Heart left ventricle (tissue), 16 donors: ENCODE measurements at regions of chr4 and their contacts with region 1.

Region 1: DNA sequence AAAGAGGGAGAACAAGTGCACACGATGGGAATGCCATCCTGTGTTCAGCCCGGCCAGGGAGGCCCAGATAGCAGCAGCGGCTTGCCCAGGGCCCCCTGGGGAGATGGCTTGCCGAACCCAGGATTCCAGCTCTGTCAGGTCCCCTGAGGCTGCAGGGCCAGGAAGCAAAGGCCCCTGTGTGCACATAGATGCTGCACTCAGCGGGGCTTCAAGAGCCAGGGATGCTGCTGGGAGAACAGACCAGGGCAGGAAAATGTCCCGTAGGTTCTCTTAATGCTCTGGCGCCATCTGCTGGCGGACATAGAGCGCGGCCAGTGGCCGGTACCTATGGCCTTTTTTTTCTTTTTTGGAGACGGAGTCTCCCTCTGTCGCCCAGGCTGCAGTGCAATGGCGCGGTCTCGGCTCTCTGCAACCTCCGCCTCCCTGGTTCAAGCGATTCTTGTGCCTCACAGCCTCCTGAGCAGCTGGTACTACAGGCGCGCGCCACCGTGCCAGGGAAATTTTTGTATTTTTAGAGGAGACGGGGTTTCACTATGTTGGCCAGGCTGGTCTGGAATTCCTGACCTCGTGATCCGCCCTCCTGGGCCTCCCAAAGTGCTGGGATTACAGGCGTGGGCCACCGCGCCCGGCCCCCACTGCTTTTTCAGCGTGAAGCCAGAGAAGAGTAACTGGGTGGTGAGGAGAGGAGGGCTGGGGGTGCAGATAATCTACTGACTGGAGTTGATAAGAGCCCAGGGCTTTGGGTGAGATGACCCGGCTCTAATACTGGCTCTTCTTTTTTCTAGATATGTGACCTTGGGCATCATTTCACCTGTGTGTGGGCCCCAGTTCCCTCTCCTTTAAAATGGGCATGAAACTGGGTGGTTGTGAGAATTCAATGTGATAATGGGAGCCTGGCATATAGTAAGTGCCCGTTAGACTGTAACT is 22.5 kb downstream of the MED28 start:
- DNase-seq: peak; percentile 64 to 84 (median 75)
- ATAC-seq: peak; percentile 60 to 93 (median 84)
- H3K4me3 ChIP-seq: no peak overlapping the region
- H3K27ac ChIP-seq: no peak overlapping the region
- H3K4me1 ChIP-seq: peaks cover 0 to 5% (median 0%) of the 10 kb centered on the region in 12 donors
- H3K27me3 ChIP-seq: no peaks in the 10 kb centered on the region
- CTCF ChIP-seq: peak; percentile 84 to 96 (median 90)
- POLR2A ChIP-seq: no peak

Region 2: DNA sequence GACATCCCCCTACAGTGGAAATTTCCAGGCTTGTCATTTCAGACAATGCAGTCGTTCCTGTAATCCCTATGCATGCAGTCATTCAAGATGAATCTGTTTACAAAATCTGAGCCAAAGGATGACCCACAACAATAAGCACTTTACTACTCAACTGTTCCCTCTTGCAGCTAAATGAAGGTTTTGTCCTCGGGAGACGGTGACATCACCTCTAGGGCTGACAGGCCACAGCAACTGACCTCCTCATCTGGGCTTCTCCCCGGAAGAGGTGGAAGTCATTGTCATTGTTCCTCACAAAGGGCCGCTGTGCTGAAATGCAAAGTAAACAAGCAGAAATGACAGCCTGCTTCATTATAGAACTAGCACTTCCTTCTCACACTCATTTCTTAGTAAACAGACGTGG is 92.8 kb before region 1 on chr4:
- intact Hi-C with region 1: loop called in 9 of 10 experiments (anchors 1 to 5 kb)
- DNase-seq: no peak
- ATAC-seq: no peak
- H3K4me3 ChIP-seq: no peak overlapping the region
- H3K27ac ChIP-seq: no peak overlapping the region
- H3K4me1 ChIP-seq: peaks cover 0 to 7% (median 0%) of the 10 kb centered on the region in 12 donors
- H3K27me3 ChIP-seq: no peaks in the 10 kb centered on the region
- CTCF ChIP-seq: no peak
- POLR2A ChIP-seq: no peak

Region 3: GRCh38 chr4:17552427-17552826 is 84.5 kb before region 1 on chr4:
- intact Hi-C with region 1: loop called (anchors 1 to 5 kb)
- DNase-seq: no peak
- ATAC-seq: no peak
- H3K4me3 ChIP-seq: no peak overlapping the region
- H3K27ac ChIP-seq: no peak overlapping the region
- H3K4me1 ChIP-seq: no peaks in the 10 kb centered on the region
- H3K27me3 ChIP-seq: peaks cover 0 to 10% (median 3%) of the 10 kb centered on the region in 9 donors
- CTCF ChIP-seq: no peak
- POLR2A ChIP-seq: no peak

Region 4: DNA sequence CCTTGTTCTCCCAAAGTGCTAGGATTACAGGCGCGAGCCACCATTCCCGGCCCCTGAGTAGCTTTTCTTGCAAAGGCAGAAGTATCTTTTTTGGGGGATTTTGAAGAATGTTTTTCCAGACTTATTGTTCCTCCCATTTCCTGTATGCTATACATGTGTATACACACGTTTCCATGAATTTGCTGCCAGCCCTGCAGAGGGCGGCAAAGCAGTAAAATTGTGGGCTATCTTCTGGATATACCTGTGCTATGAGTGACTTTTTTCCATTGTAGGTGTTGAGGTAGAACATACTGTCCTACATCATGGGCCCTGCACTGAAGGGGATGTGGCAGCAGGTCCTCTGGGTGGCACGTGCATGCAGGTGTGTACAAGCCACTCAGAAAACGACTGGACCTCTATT is 39.4 kb before region 1 on chr4:
- intact Hi-C with region 1: loop called in 1 of 10 experiments (anchors 2 kb)
- DNase-seq: no peak
- ATAC-seq: no peak
- H3K4me3 ChIP-seq: no peak overlapping the region
- H3K27ac ChIP-seq: no peak overlapping the region
- H3K4me1 ChIP-seq: peaks cover 0 to 39% (median 0%) of the 10 kb centered on the region in 12 donors
- H3K27me3 ChIP-seq: no peaks in the 10 kb centered on the region
- CTCF ChIP-seq: peak in 3 of 12 donors; percentile 12 to 20 (median 18)
- POLR2A ChIP-seq: no peak

Region 5: DNA sequence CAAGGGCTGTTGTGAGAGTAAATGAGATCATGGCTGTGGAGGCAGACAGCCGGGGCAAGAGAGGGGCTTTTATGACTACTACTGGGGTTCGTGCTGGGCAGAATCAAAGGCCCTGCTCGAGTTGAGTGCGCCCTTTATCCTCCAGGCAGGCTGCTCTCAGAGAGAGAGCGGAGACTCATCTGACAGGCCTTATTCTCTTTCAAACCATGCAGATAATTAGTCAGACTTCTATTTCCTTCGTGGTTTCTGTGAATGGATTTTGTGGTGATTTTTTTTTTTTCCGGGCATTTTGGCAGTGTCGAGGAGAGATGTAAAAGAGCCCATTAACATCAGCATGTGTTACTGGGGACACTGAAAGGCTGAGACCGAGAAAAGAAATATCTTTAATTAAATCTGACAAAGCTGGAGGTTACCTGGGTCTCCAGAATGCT is 51.1 kb after region 1 on chr4:
- intact Hi-C with region 1: no loop called
- DNase-seq: no peak
- ATAC-seq: no peak
- H3K4me3 ChIP-seq: no peak overlapping the region
- H3K27ac ChIP-seq: no peak overlapping the region
- H3K4me1 ChIP-seq: no peaks in the 10 kb centered on the region
- H3K27me3 ChIP-seq: no peaks in the 10 kb centered on the region
- CTCF ChIP-seq: no peak
- POLR2A ChIP-seq: no peak

Region 6: DNA sequence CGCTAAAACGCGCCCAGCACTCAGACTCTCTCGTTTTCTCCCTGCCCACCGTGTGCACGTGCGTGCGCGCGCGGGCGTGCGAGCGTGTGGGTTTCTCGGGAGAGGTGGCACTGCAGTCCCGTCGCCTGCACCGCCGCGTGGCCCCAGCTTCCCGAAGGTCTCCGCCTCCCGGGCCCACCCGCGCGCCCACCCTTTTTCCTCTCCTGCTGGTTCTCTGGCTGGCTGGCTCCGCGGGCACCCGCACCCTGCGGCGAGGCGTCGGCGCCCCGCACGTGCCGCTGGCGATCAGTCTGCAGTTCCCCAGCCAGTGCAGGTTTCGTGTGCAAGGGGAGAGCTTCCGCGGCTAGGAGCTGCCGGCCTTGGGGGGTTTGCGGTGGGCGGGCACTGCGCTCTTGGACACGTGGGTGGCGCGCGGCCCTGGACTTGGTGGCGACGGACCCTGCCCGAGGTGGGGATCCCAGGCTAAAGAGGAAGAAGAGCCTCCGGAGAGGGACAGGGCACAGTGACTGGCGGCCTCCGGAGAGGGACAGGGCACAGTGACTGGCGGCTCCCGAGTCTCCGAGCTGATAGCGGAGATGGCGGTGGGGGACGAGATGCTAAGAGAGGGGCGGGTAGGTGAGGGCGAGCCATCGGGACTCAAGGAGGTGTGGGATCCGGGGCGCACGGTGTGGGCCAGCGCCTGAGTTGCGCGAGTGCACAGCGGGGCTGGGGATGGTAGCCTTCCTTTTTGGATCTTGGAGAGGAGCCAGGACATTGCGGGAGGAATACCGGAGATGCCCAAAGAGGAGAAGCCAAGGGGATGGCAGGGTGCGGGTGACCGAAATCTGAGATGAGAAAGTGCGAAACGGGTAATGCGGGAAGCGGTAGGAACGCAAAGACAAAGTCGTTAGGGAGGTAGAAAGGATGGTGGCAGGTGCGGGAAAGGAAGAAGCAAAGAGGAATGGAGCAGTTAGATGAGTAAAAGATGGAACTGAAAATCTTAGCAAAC is 144.6 kb after region 1 on chr4 and contains the start of gene FAM184B:
- intact Hi-C with region 1: loop called in 1 of 10 experiments (anchors 10 kb)
- DNase-seq: no peak
- ATAC-seq: peak in 3 of 4 donors; percentile 20 to 46 (median 24)
- H3K4me3 ChIP-seq: peak within 1 kb of the TSS; percentile 15 to 53 (median 45)
- H3K27ac ChIP-seq: no peak within 1 kb of the TSS
- H3K4me1 ChIP-seq: peaks cover 0 to 19% (median 9%) of the 10 kb centered on the region in 12 donors
- H3K27me3 ChIP-seq: peaks cover 0 to 36% (median 10%) of the 10 kb centered on the region in 9 donors
- CTCF ChIP-seq: no peak
- POLR2A ChIP-seq: no peak
- total RNA-seq, gene FAM184B: 0.08 TPM in 1 of 9 donors, not detected in the others

Region 7: DNA sequence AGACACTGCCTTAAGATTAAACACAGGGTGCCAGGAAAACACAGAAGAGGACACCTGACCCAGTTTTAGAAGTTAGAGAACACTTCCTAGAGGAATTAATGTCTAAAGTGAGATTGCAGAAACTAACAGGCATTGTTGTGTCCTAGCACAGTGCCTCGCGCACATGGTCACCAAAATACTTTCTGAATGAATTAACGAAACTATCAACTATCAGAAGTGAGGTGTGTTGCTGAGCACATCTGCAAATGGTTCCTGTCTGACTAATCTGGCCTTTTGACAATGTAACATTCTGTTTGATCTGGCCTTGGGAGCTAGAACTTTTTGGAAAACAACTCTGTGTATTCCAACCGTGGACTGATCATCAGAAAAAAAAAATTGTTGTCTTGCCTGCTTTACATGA is 941.3 kb after region 1 on chr4:
- intact Hi-C with region 1: loop called in 1 of 10 experiments (anchors 10 kb)
- DNase-seq: no peak
- ATAC-seq: no peak
- H3K4me3 ChIP-seq: no peak overlapping the region
- H3K27ac ChIP-seq: no peak overlapping the region
- H3K4me1 ChIP-seq: no peaks in the 10 kb centered on the region
- H3K27me3 ChIP-seq: peaks cover 0 to 13% (median 0%) of the 10 kb centered on the region in 9 donors
- CTCF ChIP-seq: no peak
- POLR2A ChIP-seq: no peak

Region 8: DNA sequence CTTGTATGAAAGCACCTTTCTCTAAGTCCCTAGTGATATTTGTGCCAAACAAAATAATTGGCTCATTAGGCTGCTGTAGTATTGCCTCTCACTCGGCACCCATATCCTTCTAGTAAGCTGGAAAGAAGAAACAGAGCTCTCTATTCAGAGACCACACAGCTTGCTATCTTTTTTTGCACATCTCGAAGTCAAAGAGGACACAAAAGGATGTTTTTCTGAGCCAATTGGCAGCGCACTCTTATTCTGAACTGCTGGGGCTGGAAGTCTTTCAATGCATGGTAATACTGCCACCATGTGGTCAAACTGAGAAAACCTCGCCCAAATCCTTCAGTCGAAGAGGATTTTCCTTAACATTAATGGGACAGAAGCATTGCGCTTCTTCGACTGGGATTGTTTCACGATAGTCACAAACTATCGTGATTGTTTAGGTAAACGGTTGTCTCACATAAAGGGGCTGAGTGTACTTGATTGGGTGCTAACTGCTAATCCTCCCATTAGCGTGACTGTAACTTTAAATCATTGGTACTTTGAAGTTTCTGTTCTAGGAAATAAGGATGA is 956.6 kb after region 1 on chr4:
- intact Hi-C with region 1: loop called in 2 of 10 experiments (anchors 10 kb)
- DNase-seq: peak in 2 of 5 donors; percentile 32 to 40
- ATAC-seq: peak in 3 of 4 donors; percentile 50 to 73 (median 61)
- H3K4me3 ChIP-seq: no peak overlapping the region
- H3K27ac ChIP-seq: no peak overlapping the region
- H3K4me1 ChIP-seq: peaks cover 0 to 8% (median 0%) of the 10 kb centered on the region in 12 donors
- H3K27me3 ChIP-seq: peaks cover 0 to 4% (median 0%) of the 10 kb centered on the region in 9 donors
- CTCF ChIP-seq: peak; percentile 66 to 88 (median 82)
- POLR2A ChIP-seq: no peak